Caco-2 (cell line): ENCODE measurements at regions of chr18 and their contacts with region 1.

Region 1: DNA sequence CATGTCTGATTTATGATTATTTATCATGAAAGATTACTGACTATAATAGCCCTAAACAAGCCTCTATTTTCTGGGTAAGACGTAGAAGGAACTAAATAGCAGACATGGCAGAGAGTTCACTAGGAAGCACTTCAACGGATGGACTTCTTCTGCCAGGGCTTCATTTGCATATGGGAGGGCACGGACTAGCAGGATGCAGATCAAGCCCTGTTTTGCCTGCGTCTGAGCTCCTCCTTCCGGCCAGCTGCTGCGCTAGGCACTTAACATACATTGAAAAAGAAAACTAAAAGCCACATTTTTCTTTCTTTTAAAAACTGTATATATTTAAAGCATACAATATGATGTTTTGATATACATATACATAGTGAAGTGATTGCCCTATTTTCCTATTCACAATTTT is 340.0 kb upstream of the MEX3C start:
- DNase-seq: peak; percentile 24 to 42
- H3K4me3 ChIP-seq: no peak overlapping the region
- H3K4me3 Mint-ChIP-seq: no peak overlapping the region
- H3K27ac Mint-ChIP-seq: no peak overlapping the region
- H3K4me1 ChIP-seq: no peaks in the 10 kb centered on the region
- H3K4me1 Mint-ChIP-seq: no peaks in the 10 kb centered on the region
- H3K27me3 ChIP-seq: no peaks in the 10 kb centered on the region
- H3K27me3 Mint-ChIP-seq: no peaks in the 10 kb centered on the region
- CTCF ChIP-seq: peak in 1 of 2 experiments; percentile 60

Region 2: GRCh38 chr18:51110073-51110803 is 427.2 kb before region 1 on chr18:
- CTCF ChIA-PET with region 1: no interaction called
- POLR2A ChIA-PET with region 1: no interaction called
- intact Hi-C with region 1: loop called (anchors 1 kb)
- DNase-seq: peak in 1 of 2 experiments; percentile 58
- H3K4me3 ChIP-seq: no peak overlapping the region
- H3K4me3 Mint-ChIP-seq: no peak overlapping the region
- H3K27ac Mint-ChIP-seq: no peak overlapping the region
- H3K4me1 ChIP-seq: no peaks in the 10 kb centered on the region
- H3K4me1 Mint-ChIP-seq: no peaks in the 10 kb centered on the region
- H3K27me3 ChIP-seq: no peaks in the 10 kb centered on the region
- H3K27me3 Mint-ChIP-seq: no peaks in the 10 kb centered on the region
- CTCF ChIP-seq: peak; percentile 33 to 45

Region 3: DNA sequence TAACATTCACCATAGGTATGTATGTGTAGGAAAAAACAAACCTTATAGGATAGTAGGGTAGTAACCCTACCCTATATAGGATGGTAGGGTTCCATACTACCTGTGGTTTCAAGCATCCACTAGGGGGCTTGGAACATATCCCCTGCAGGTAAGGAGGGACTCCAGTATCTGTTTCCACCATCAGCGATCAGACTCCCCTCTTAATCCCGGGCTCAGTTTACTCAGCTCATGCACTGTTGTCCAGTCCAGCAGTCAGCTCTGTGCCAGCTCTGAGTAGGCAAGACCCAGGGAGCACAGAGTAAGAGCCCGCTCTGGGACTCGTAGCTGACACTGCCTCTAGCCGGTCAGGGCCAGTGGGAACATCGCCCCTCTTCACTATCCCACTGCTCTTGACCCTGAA is 401.7 kb before region 1 on chr18:
- CTCF ChIA-PET with region 1: no interaction called
- POLR2A ChIA-PET with region 1: no interaction called
- intact Hi-C with region 1: loop called (anchors 10 kb)
- DNase-seq: peak in 1 of 2 experiments; percentile 13
- H3K4me3 ChIP-seq: no peak overlapping the region
- H3K4me3 Mint-ChIP-seq: no peak overlapping the region
- H3K27ac Mint-ChIP-seq: no peak overlapping the region
- H3K4me1 ChIP-seq: no peaks in the 10 kb centered on the region
- H3K4me1 Mint-ChIP-seq: no peaks in the 10 kb centered on the region
- H3K27me3 ChIP-seq: no peaks in the 10 kb centered on the region
- H3K27me3 Mint-ChIP-seq: no peaks in the 10 kb centered on the region
- CTCF ChIP-seq: peak; percentile 17 to 24

Region 4: GRCh38 chr18:51197661-51198424 is 339.6 kb before region 1 on chr18 and contains the start of gene MEX3C:
- CTCF ChIA-PET with region 1: no interaction called
- POLR2A ChIA-PET with region 1: no interaction called
- intact Hi-C with region 1: loop called (anchors 2 kb)
- DNase-seq: peak; percentile 94 to 96
- H3K4me3 ChIP-seq: peak within 1 kb of the TSS; percentile 57
- H3K4me3 Mint-ChIP-seq: peak within 1 kb of the TSS; percentile 89
- H3K27ac Mint-ChIP-seq: peak within 1 kb of the TSS; percentile 97
- H3K4me1 ChIP-seq: no peaks in the 10 kb centered on the region
- H3K4me1 Mint-ChIP-seq: peaks cover 7% of the 10 kb centered on the region
- H3K27me3 ChIP-seq: no peaks in the 10 kb centered on the region
- H3K27me3 Mint-ChIP-seq: no peaks in the 10 kb centered on the region
- CTCF ChIP-seq: peak in 1 of 2 experiments; percentile 10
- total RNA-seq, gene MEX3C: 44.8 and 47.0 TPM in 2 replicates

Region 5: GRCh38 chr18:51321336-51322095 is 216.0 kb before region 1 on chr18:
- CTCF ChIA-PET with region 1: no interaction called
- POLR2A ChIA-PET with region 1: no interaction called
- intact Hi-C with region 1: loop called (anchors 1 kb)
- DNase-seq: peak; percentile 68 to 74
- H3K4me3 ChIP-seq: no peak overlapping the region
- H3K4me3 Mint-ChIP-seq: no peak overlapping the region
- H3K27ac Mint-ChIP-seq: peak overlapping the region; percentile 72
- H3K4me1 ChIP-seq: peaks cover 25% of the 10 kb centered on the region
- H3K4me1 Mint-ChIP-seq: peaks cover 14% of the 10 kb centered on the region
- H3K27me3 ChIP-seq: no peaks in the 10 kb centered on the region
- H3K27me3 Mint-ChIP-seq: no peaks in the 10 kb centered on the region
- CTCF ChIP-seq: no peak

Region 6: GRCh38 chr18:51404620-51405019 is 132.9 kb before region 1 on chr18:
- CTCF ChIA-PET with region 1: no interaction called
- POLR2A ChIA-PET with region 1: no interaction called
- intact Hi-C with region 1: no loop called
- DNase-seq: no peak
- H3K4me3 ChIP-seq: no peak overlapping the region
- H3K4me3 Mint-ChIP-seq: no peak overlapping the region
- H3K27ac Mint-ChIP-seq: no peak overlapping the region
- H3K4me1 ChIP-seq: no peaks in the 10 kb centered on the region
- H3K4me1 Mint-ChIP-seq: no peaks in the 10 kb centered on the region
- H3K27me3 ChIP-seq: no peaks in the 10 kb centered on the region
- H3K27me3 Mint-ChIP-seq: no peaks in the 10 kb centered on the region
- CTCF ChIP-seq: no peak

Region 7: GRCh38 chr18:51437280-51438271 is 99.9 kb before region 1 on chr18:
- CTCF ChIA-PET with region 1: no interaction called
- POLR2A ChIA-PET with region 1: no interaction called
- intact Hi-C with region 1: no loop called
- DNase-seq: no peak
- H3K4me3 ChIP-seq: no peak overlapping the region
- H3K4me3 Mint-ChIP-seq: peak overlapping the region; percentile 20
- H3K27ac Mint-ChIP-seq: no peak overlapping the region
- H3K4me1 ChIP-seq: no peaks in the 10 kb centered on the region
- H3K4me1 Mint-ChIP-seq: peaks cover 8% of the 10 kb centered on the region
- H3K27me3 ChIP-seq: no peaks in the 10 kb centered on the region
- H3K27me3 Mint-ChIP-seq: no peaks in the 10 kb centered on the region
- CTCF ChIP-seq: no peak

Region 8: GRCh38 chr18:51498085-51498855 is 39.2 kb before region 1 on chr18:
- CTCF ChIA-PET with region 1: no interaction called
- POLR2A ChIA-PET with region 1: no interaction called
- intact Hi-C with region 1: no loop called
- DNase-seq: no peak
- H3K4me3 ChIP-seq: no peak overlapping the region
- H3K4me3 Mint-ChIP-seq: no peak overlapping the region
- H3K27ac Mint-ChIP-seq: no peak overlapping the region
- H3K4me1 ChIP-seq: no peaks in the 10 kb centered on the region
- H3K4me1 Mint-ChIP-seq: no peaks in the 10 kb centered on the region
- H3K27me3 ChIP-seq: no peaks in the 10 kb centered on the region
- H3K27me3 Mint-ChIP-seq: no peaks in the 10 kb centered on the region
- CTCF ChIP-seq: no peak

Region 9: DNA sequence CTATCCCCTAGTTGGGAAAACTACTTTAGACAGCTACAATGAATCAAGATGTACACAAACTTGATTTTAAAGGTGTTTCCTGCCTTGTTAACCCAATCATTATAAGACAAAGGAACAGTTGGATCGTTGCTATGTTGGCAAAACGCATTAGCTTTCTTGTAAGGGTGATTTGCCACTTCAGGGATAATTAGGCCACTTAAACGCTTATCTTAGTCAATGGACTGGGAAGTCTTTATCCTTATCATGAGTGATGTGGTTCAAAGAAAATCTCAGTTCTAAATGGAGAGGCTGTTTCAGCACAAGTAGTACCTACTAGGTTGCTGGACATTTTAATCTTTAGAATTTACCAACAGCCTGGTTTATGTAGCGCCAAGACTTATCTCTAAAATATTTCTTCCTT is 66.1 kb after region 1 on chr18:
- CTCF ChIA-PET with region 1: no interaction called
- POLR2A ChIA-PET with region 1: no interaction called
- intact Hi-C with region 1: no loop called
- DNase-seq: no peak
- H3K4me3 ChIP-seq: no peak overlapping the region
- H3K4me3 Mint-ChIP-seq: no peak overlapping the region
- H3K27ac Mint-ChIP-seq: no peak overlapping the region
- H3K4me1 ChIP-seq: no peaks in the 10 kb centered on the region
- H3K4me1 Mint-ChIP-seq: no peaks in the 10 kb centered on the region
- H3K27me3 ChIP-seq: no peaks in the 10 kb centered on the region
- H3K27me3 Mint-ChIP-seq: no peaks in the 10 kb centered on the region
- CTCF ChIP-seq: no peak